Left cardiac atrium (tissue), 4 donors: ENCODE measurements at regions of chr11 and their contacts with region 1.

Region 1: DNA sequence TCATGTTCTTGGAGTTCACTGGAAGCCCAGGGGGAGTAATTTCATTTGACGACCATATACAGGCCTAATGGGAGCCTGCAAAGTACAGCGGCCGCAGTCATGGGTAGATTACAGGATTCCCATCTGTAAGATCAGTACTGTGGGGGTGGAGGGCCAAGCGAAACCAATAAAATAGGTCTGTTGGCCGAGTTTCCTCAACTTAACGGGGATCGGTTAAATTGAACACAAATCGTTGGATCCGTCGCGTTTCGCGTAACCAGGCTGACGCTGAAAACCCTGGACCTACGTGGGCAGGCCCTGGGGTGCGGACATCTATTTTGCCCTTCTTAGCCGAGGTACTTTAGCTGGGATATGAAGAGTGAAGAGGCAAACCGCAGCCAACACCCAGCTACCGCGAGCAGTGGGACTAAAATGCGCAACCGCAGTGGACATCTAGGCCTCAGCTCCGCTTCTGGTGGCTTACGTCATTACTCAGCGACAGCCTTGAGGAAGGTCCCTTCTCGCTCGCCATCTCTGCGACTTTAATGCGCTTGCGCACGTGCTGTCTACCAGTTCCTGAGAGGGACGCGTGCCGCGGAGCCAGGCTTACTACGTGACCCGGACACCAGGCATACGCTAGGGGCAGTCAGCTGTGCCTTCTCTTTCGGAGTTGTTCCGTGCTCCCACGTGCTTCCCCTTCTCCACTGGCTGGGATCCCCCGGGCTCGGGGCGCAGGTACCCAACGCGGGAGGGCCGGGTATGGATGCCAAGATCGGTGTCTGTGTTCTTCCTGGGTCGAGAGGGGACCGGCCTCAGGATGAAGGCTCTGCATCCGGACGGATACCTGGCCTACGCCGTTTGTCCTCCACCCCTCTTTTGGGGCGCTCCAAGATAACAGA is at the start of gene NAT10:
- DNase-seq: peak; percentile 98
- ATAC-seq: peak; percentile 98
- total RNA-seq, gene NAT10: 20.1 to 29.0 TPM

Region 2: DNA sequence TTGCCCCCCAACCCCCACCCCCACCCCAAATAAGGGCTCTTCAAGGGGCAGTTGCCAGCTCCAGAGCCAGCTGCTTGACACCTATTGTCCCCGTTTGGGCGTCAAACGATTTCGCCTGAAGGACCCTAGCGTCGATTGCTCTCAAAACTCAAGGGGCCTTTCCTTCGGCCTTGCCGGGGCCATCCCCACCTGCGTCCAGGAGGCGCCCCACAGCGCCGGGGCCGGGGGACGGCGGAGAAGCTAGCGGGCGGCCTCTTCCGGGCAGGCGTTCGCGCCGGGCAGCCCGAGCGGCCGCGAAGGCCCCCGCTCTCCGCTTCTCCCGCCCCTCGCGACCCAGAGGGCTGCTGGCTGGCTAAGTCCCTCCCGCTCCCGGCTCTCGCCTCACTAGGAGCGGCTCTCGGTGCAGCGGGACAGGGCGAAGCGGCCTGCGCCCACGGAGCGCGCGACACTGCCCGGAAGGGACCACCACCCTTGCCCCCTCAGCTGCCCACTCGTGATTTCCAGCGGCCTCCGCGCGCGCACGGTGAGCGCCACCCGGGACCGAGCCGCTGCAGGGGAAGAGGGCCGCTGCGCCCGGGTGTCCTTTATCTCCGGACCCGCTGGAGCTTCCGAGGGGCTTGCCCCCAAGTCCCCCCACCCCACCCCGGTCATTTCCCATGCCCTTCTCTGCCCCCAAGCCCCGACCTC is 53.8 kb before region 1 on chr11 and contains the start of gene CAPRIN1:
- intact Hi-C with region 1: loop called in 1 of 2 experiments (anchors 2 kb)
- DNase-seq: peak; percentile 91
- ATAC-seq: peak; percentile 93 to 94
- total RNA-seq, gene CAPRIN1: 102 to 106 TPM